Esophagus squamous epithelium (tissue), 5 donors: ENCODE measurements at regions of chr2 and their contacts with region 1.

Region 1: GRCh38 chr2:11829947-11830707 is 83.7 kb downstream of the LPIN1 start:
- DNase-seq: peak; percentile 6
- H3K4me3 ChIP-seq: peak overlapping the region; percentile 13 to 50 (median 27)
- H3K27ac ChIP-seq: peak overlapping the region; percentile 62 to 85 (median 72)
- H3K4me1 ChIP-seq: peaks cover 7 to 29% (median 19%) of the 10 kb centered on the region in 3 donors
- H3K27me3 ChIP-seq: no peaks in the 10 kb centered on the region
- CTCF ChIP-seq: peak; percentile 12 to 56 (median 27)
- POLR2A ChIP-seq: no peak

Region 2: GRCh38 chr2:12716282-12717190 is 886.4 kb after region 1 on chr2 and contains the start of gene TRIB2:
- intact Hi-C with region 1: loop called (anchors 5 kb)
- DNase-seq: peak; percentile 67
- H3K4me3 ChIP-seq: peak within 1 kb of the TSS; percentile 53 to 93 (median 80)
- H3K27ac ChIP-seq: peak within 1 kb of the TSS; percentile 87 to 92 (median 90)
- H3K4me1 ChIP-seq: peaks cover 13 to 63% (median 20%) of the 10 kb centered on the region in 3 donors
- H3K27me3 ChIP-seq: peaks cover 0 to 6% (median 0%) of the 10 kb centered on the region in 4 donors
- CTCF ChIP-seq: peak in 2 of 6 experiments; percentile 1 to 16
- POLR2A ChIP-seq: peak in 2 of 4 donors; percentile 63 to 74
- total RNA-seq, gene TRIB2: 9.8 to 42.2 (median 32.4) TPM

Region 3: DNA sequence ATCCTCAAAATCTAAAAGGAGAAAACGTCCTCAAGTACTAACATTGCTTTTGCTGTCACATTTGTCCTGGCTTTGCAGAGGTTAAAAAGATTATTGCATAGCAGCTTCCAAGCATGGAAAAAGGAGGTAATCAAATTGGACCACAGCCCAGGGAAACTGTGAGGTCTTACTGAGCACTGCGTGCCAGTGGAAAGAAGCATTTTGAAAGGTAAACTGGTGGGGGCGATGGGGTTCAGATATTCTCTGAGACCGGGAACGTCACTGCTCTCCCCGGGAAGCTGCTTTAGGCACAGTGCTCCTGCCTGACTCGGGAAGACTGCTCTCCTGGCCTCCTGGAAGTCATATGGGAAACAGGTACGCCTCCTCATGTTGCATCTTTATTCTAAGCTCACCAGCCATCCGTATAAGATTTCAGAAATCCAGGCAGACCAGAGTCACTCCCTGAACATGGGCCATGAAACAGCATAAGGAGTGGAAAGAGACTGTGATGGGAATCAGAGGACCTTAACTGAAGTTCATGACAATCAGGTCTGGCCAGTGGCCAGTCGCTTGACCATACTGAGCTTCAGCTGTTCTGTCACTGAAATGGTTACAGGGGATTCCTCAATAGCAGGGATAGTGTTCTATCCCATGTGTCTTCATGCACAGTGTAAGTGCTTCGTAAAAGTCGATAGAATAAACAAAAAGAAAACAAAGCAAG is 1170.7 kb after region 1 on chr2:
- intact Hi-C with region 1: loop called (anchors 5 kb)
- DNase-seq: no peak
- H3K4me3 ChIP-seq: no peak overlapping the region
- H3K27ac ChIP-seq: no peak overlapping the region
- H3K4me1 ChIP-seq: peaks cover 0 to 21% (median 0%) of the 10 kb centered on the region in 3 donors
- H3K27me3 ChIP-seq: no peaks in the 10 kb centered on the region
- CTCF ChIP-seq: no peak
- POLR2A ChIP-seq: no peak